ENCODE measurements at regions of chr11 and their contacts with region 1.

Region 1: GRCh38 chr11:67288452-67289225 is 464 bp upstream of the ANKRD13D start:
- DNase-seq: peak; percentile 92
- H3K4me3 Mint-ChIP-seq: peak overlapping the region; percentile 92
- H3K27ac Mint-ChIP-seq: peak overlapping the region; percentile 96
- H3K4me1 Mint-ChIP-seq: peaks cover 23% of the 10 kb centered on the region
- H3K27me3 Mint-ChIP-seq: no peaks in the 10 kb centered on the region
- CTCF ChIP-seq: peak; percentile 11

Region 2: DNA sequence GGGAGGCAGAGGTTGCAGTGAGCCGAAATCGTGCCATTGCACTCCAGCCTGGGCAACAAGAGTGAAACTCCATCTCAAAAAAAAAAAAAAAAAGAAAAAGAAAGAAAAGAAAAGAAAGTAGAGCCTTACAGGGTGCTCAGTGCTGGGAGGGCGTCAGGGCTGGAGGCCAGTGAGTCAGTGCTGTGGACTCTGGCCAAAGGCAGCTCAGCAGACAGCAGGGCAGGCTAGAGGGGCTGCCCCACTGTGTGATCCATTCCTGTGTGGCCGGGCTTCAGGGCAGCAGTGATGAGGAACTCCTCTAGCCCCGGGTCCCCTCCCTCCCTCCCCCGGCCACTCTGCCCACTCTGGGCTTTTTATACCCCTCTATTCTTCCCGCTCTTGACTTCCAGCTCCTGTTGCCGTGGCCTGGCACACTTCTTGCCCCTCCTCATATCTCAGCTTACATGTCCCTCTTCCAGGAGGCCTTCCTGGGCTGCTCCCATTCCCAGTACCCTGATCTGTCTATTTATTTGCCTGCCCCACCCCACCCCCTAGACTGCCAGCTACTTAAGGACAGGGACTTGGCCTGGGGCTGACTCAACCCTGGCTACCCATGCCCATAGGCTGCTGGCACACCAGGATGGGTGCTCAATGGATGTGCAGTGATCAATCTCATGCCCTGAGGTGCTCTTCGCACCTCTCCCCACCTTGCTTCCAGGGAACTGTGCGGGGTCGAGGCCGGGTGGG is 255.6 kb before region 1 on chr11:
- CTCF ChIA-PET with region 1: no interaction called
- POLR2A ChIA-PET with region 1: no interaction called
- intact Hi-C with region 1: no loop called
- DNase-seq: peak; percentile 84
- H3K4me3 Mint-ChIP-seq: no peak overlapping the region
- H3K27ac Mint-ChIP-seq: peak overlapping the region; percentile 29
- H3K4me1 Mint-ChIP-seq: peaks cover 27% of the 10 kb centered on the region
- H3K27me3 Mint-ChIP-seq: no peaks in the 10 kb centered on the region
- CTCF ChIP-seq: no peak

Region 3: DNA sequence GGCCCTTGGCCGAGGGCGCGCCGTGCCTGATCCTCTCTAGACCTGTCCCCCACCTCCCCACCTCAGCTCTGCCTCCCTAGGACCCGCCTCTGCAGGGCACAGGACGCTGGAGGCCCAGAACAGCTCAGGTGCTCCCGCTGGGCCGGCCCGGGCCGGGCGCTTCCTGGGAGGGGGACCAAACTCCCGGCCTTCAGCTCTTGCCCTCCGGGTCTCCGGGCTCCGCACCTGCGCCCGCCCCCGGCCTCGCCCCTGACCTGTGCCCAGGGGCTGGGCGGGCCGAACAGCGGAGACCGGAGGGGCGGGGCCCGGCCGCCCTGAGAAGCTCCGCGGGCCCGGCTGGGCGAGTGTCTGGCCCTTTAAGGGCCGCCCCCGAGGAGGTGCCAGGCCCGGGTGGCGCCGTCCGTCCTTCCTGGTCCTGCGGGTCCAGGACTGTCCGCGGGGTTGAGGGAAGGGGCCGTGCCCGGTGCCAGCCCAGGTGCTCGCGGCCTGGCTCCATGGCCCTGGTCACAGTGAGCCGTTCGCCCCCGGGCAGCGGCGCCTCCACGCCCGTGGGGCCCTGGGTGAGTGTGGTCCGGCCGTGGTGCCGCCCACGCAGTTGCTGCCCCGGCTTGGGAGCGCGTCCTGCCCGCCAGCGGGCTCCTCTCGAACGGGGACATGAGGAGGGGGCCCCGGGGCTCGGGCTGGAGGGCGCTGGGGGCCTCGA is 14.6 kb after region 1 on chr11 and contains the start of gene SSH3:
- CTCF ChIA-PET with region 1: interaction called, 5 read pairs
- POLR2A ChIA-PET with region 1: interaction called, 51 read pairs
- intact Hi-C with region 1: no loop called
- DNase-seq: peak; percentile 81
- H3K4me3 Mint-ChIP-seq: peak within 1 kb of the TSS; percentile 70
- H3K27ac Mint-ChIP-seq: peak within 1 kb of the TSS; percentile 23
- H3K4me1 Mint-ChIP-seq: peaks cover 11% of the 10 kb centered on the region
- H3K27me3 Mint-ChIP-seq: no peaks in the 10 kb centered on the region
- CTCF ChIP-seq: no peak
- total RNA-seq, gene SSH3: 31.7 and 38.0 TPM in 2 replicates

Region 4: DNA sequence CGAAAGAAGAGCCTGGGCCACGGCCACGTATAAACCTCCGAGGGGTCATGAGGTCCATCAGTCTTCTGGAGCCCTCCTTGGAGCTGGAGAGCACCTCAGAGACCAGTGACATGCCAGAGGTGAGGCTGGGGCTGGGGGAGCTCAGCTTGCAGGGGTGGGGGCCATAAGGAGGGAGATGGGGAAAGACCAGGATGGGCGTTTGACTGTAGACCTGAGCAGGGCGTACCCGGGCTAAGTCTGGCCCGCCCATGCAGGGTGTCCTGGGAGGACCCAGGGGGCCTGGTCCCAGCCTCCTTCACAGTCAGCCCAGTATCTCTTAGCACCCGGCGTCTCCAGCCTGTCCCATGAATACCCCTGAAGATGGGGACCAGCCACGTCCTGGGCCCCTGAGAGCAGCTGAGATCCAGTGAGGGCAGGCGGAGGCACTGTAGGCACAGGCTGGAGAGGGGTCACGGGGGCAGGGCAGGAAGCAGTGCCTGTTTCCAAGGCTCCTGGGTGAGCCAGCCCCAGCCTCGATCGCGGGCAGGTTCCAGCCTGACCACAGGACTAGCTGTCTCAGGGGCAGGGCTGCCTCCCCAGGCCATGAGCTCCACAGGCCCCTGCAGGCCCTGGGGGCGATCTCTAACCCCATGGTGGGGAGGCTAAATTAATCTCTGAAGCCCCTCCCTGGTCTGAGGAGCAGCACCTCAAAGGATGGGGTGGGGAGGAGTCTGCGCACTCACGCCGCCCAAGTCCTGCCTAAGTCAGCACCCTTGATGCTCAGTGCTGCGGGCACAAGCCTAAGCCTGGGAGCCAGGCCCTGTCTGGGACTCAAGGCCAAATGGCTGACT is 21.8 kb after region 1 on chr11:
- CTCF ChIA-PET with region 1: interaction called, 5 read pairs
- POLR2A ChIA-PET with region 1: interaction called, 36 read pairs
- intact Hi-C with region 1: no loop called
- DNase-seq: no peak
- H3K4me3 Mint-ChIP-seq: no peak overlapping the region
- H3K27ac Mint-ChIP-seq: no peak overlapping the region
- H3K4me1 Mint-ChIP-seq: peaks cover 35% of the 10 kb centered on the region
- H3K27me3 Mint-ChIP-seq: no peaks in the 10 kb centered on the region
- CTCF ChIP-seq: no peak

Measured in MCF 10A (cell line).